Activated CD4-positive, alpha-beta memory T cell treated with anti-CD3 and anti-CD28 coated beads, Interleukin-2, amount 10 ng/mL, durations not matched to agents 7 days and 5 days (primary cell): ENCODE measurements at regions of chr10 and their contacts with region 1.

Region 1: GRCh38 chr10:99732033-99732912 is at the starts of genes COX15 and CUTC:
- DNase-seq: peak; percentile 96
- H3K4me3 Mint-ChIP-seq: peak within 1 kb of the TSS; percentile 100
- H3K27ac Mint-ChIP-seq: peak within 1 kb of the TSS; percentile 100
- H3K4me1 Mint-ChIP-seq: peaks cover 37% of the 10 kb centered on the region
- H3K27me3 Mint-ChIP-seq: no peaks in the 10 kb centered on the region
- total RNA-seq, gene COX15: 38.5 to 39.0 TPM
- total RNA-seq, gene CUTC: 25.6 to 28.2 TPM

Region 2: GRCh38 chr10:99659031-99659867 is 73.0 kb before region 1 on chr10 and contains the start of gene ENTPD7:
- CTCF ChIA-PET with region 1: interaction called, 7 read pairs
- POLR2A ChIA-PET with region 1: interaction called, 24 read pairs
- DNase-seq: peak; percentile 93
- H3K4me3 Mint-ChIP-seq: peak within 1 kb of the TSS; percentile 84
- H3K27ac Mint-ChIP-seq: peak within 1 kb of the TSS; percentile 69
- H3K4me1 Mint-ChIP-seq: peaks cover 24% of the 10 kb centered on the region
- H3K27me3 Mint-ChIP-seq: peaks cover 18% of the 10 kb centered on the region
- total RNA-seq, gene ENTPD7: 4.1 to 4.3 TPM

Region 3: DNA sequence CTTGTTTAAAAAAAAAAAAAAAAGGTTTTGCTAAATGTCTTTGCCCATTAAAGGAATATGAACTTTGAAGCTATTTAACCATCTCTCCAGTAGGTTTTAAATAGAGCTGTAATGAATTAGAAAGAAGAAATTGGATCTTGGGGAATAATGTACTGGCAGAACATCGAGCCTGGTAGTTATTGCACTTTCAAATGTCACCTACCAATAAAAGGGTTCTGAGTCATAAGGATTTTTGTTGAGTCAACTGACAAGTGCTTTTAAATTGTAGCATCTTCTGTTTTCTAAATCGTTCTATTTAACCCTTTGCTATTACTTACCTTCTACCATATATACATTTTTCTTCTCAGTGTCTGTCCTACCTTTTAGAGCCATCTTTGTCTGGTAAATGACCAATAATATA is 10.4 kb after region 1 on chr10:
- CTCF ChIA-PET with region 1: interaction called, 15 read pairs
- POLR2A ChIA-PET with region 1: interaction called, 18 read pairs
- DNase-seq: no peak
- H3K4me3 Mint-ChIP-seq: no peak overlapping the region
- H3K27ac Mint-ChIP-seq: no peak overlapping the region
- H3K4me1 Mint-ChIP-seq: peaks cover 6% of the 10 kb centered on the region
- H3K27me3 Mint-ChIP-seq: no peaks in the 10 kb centered on the region

Region 4: GRCh38 chr10:99827936-99828335 is 95.7 kb after region 1 on chr10:
- CTCF ChIA-PET with region 1: interaction called, 5 read pairs
- POLR2A ChIA-PET with region 1: interaction called, 14 read pairs
- DNase-seq: no peak
- H3K4me3 Mint-ChIP-seq: no peak overlapping the region
- H3K27ac Mint-ChIP-seq: peak overlapping the region; percentile 81
- H3K4me1 Mint-ChIP-seq: peaks cover 28% of the 10 kb centered on the region
- H3K27me3 Mint-ChIP-seq: no peaks in the 10 kb centered on the region

Region 5: GRCh38 chr10:99888622-99889021 is 156.3 kb after region 1 on chr10:
- CTCF ChIA-PET with region 1: no interaction called
- POLR2A ChIA-PET with region 1: no interaction called
- DNase-seq: no peak
- H3K4me3 Mint-ChIP-seq: no peak overlapping the region
- H3K27ac Mint-ChIP-seq: no peak overlapping the region
- H3K4me1 Mint-ChIP-seq: no peaks in the 10 kb centered on the region
- H3K27me3 Mint-ChIP-seq: no peaks in the 10 kb centered on the region

Region 6: GRCh38 chr10:99906470-99906869 is 174.2 kb after region 1 on chr10:
- CTCF ChIA-PET with region 1: no interaction called
- POLR2A ChIA-PET with region 1: no interaction called
- DNase-seq: no peak
- H3K4me3 Mint-ChIP-seq: no peak overlapping the region
- H3K27ac Mint-ChIP-seq: no peak overlapping the region
- H3K4me1 Mint-ChIP-seq: peaks cover 7% of the 10 kb centered on the region
- H3K27me3 Mint-ChIP-seq: no peaks in the 10 kb centered on the region